AG04449 (cell line): ENCODE measurements at regions of chr3 and their contacts with region 1.

Region 1: GRCh38 chr3:30012941-30013543 is 593.4 kb upstream of the TGFBR2 start:
- DNase-seq: no peak
- H3K4me3 ChIP-seq: no peak overlapping the region
- CTCF ChIP-seq: peak; percentile 39

Region 2: DNA sequence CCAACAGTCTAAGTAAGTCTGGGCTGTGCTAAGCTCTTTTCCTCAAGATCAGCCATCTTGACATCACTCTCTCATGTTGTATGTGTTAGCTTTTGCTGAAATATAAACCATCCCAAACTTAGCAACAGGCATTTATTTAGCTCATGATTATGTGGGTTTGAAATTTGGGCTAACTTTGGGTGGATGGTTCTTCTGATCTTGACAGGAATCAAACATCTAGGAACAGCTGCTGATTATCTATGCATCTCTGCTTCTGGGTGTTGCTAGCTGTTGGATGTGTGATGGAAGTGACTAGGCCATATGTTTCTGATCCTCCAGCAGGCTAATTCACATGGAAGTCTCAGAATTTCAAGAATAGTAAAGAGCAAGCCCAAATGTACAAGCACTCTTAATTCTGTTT is 21.8 kb before region 1 on chr3:
- CTCF ChIA-PET with region 1: interaction called, 11 read pairs
- POLR2A ChIA-PET with region 1: no interaction called
- DNase-seq: no peak
- H3K4me3 ChIP-seq: no peak overlapping the region
- CTCF ChIP-seq: no peak

Region 3: DNA sequence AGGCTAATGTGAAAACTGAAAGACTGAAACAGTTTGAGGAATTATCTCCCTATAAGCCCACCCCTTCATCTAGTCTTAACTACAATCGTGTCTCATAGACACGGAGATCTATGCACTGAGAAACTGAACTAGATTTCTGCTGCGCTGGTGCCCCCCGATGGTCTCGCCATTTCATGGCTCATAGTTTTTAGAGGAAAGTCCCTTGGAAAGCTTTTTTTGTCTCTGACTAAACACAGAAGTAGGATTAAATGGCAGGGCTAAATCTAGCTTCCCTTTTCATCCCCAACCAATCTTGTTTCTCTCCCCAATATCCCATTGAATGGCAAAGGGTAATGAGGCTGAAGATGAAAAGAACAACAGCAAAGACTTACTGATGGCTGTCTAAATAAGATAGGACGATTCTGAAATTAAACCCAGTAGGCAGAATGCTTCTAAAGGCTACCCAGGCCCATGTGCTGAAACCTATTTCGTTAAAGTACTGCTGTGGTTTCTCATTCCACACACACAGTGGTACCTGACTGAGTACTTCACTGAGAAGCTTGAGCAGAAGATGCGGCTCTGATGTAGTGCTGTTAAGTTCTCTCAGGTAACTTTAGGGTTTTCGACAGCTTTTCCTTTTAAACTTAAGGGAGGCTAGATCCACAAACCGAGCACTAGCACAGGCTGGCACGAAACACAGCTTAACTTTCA is 738.7 kb after region 1 on chr3:
- CTCF ChIA-PET with region 1: interaction called, 77 read pairs
- POLR2A ChIA-PET with region 1: no interaction called
- DNase-seq: no peak
- H3K4me3 ChIP-seq: no peak overlapping the region
- CTCF ChIP-seq: peak; percentile 43